Activated CD4-positive, alpha-beta T cell treated with anti-CD3 and anti-CD28 coated beads, Interleukin-2, amount 10 ng/mL, durations not matched to agents 24 days and 14 days (primary cell): ENCODE measurements at regions of chrX and their contacts with region 1.

Region 1: GRCh38 chrX:107118322-107119147 is at the start of gene RBM41:
- DNase-seq: peak; percentile 92
- H3K4me3 Mint-ChIP-seq: peak within 1 kb of the TSS; percentile 97
- H3K27ac Mint-ChIP-seq: peak within 1 kb of the TSS; percentile 97
- H3K4me1 Mint-ChIP-seq: peaks cover 23% of the 10 kb centered on the region
- H3K27me3 Mint-ChIP-seq: no peaks in the 10 kb centered on the region
- total RNA-seq, gene RBM41: 15.7 and 16.2 TPM in 2 replicates

Region 2: DNA sequence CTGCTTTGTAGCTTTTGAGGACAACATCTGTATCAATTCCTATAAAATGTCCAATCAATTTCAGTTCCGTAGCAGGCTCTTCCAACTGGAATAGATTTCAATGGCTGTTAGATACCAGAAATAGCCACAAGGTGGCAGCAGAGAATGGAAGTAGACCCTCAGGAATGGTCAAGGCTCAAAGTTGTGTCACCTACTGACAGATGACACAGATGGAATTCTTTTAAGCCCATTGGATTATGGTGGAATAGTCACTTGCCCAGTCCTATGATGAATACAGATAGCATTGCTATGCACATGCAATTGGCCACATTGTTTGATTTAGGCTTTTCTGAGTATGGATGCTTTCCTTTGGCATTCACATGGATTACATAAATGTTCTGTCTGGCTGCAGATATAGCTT is 637.2 kb before region 1 on chrX:
- intact Hi-C with region 1: loop called (anchors 10 kb)
- DNase-seq: peak; percentile 81
- H3K4me3 Mint-ChIP-seq: no peak overlapping the region
- H3K27ac Mint-ChIP-seq: no peak overlapping the region
- H3K4me1 Mint-ChIP-seq: peaks cover 16% of the 10 kb centered on the region
- H3K27me3 Mint-ChIP-seq: no peaks in the 10 kb centered on the region

Region 3: DNA sequence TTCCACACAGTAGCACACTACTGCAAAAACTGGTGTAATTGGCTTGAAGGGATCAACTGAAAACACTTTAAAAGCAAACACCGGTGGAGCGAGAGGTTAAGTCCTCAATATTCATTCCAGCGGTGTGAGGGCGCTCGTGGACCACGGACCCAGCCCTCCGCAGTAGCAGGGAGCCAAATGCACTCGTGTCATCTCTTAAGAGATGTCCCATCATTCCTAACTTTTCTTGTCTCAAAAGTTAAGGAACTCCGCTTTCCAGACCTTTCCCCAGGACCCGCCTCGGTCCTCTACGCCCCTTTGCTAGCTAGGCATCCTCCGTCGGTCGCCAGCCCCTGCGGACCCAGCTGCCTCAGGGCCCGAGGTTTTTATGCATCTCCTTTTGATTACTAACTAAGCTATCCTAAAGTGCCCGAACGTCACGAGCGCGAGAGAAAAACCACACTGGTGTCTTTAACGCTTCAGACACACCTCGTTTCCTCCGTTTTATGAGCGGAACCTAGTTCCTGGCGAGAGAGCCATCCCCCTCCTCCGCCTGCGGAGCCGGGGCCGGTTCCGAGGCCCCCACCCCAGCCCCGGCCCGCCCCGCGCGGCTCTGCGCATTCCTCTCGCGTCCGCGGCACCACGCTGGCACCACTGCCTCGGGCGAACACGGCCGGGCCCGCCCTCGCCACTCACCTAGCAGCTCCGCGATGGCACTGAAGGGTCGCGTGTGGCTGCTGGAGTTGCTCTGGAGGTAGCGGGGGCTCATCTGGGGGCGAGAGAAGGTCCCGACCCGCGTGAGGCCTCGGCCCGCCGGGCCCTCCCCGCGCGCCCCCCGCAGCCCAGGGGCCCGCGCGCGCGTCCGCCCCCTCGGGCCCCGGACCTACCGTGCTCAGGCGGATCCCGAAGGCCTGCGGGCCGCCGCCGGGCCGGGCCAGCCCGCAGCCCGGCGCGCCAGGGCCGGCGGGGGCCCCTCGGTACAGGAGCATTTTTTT is 119.2 kb before region 1 on chrX:
- intact Hi-C with region 1: loop called (anchors 1 kb)
- DNase-seq: peak; percentile 80
- H3K4me3 Mint-ChIP-seq: peak overlapping the region; percentile 88
- H3K27ac Mint-ChIP-seq: peak overlapping the region; percentile 40
- H3K4me1 Mint-ChIP-seq: peaks cover 7% of the 10 kb centered on the region
- H3K27me3 Mint-ChIP-seq: no peaks in the 10 kb centered on the region

Region 4: GRCh38 chrX:107154787-107155620 is 36.5 kb after region 1 on chrX:
- intact Hi-C with region 1: loop called (anchors 5 kb)
- DNase-seq: peak; percentile 65
- H3K4me3 Mint-ChIP-seq: peak overlapping the region; percentile 81
- H3K27ac Mint-ChIP-seq: peak overlapping the region; percentile 87
- H3K4me1 Mint-ChIP-seq: peaks cover 5% of the 10 kb centered on the region
- H3K27me3 Mint-ChIP-seq: no peaks in the 10 kb centered on the region

Region 5: GRCh38 chrX:107205770-107206696 is 87.5 kb after region 1 on chrX and contains the starts of genes DNAAF6 and NUP62CL:
- intact Hi-C with region 1: loop called (anchors 5 kb)
- DNase-seq: peak; percentile 89
- H3K4me3 Mint-ChIP-seq: peak within 1 kb of the TSS; percentile 92
- H3K27ac Mint-ChIP-seq: peak within 1 kb of the TSS; percentile 67
- H3K4me1 Mint-ChIP-seq: peaks cover 3% of the 10 kb centered on the region
- H3K27me3 Mint-ChIP-seq: no peaks in the 10 kb centered on the region
- total RNA-seq, gene DNAAF6: not detected in 2 replicates
- total RNA-seq, gene NUP62CL: 1.1 and 1.2 TPM in 2 replicates

Region 6: GRCh38 chrX:107627838-107628661 is 509.5 kb after region 1 on chrX and contains the start of gene PRPS1:
- intact Hi-C with region 1: loop called (anchors 2 kb)
- DNase-seq: peak; percentile 96
- H3K4me3 Mint-ChIP-seq: peak within 1 kb of the TSS; percentile 94
- H3K27ac Mint-ChIP-seq: peak within 1 kb of the TSS; percentile 95
- H3K4me1 Mint-ChIP-seq: peaks cover 22% of the 10 kb centered on the region
- H3K27me3 Mint-ChIP-seq: no peaks in the 10 kb centered on the region
- total RNA-seq, gene PRPS1: 112 and 115 TPM in 2 replicates

Region 7: DNA sequence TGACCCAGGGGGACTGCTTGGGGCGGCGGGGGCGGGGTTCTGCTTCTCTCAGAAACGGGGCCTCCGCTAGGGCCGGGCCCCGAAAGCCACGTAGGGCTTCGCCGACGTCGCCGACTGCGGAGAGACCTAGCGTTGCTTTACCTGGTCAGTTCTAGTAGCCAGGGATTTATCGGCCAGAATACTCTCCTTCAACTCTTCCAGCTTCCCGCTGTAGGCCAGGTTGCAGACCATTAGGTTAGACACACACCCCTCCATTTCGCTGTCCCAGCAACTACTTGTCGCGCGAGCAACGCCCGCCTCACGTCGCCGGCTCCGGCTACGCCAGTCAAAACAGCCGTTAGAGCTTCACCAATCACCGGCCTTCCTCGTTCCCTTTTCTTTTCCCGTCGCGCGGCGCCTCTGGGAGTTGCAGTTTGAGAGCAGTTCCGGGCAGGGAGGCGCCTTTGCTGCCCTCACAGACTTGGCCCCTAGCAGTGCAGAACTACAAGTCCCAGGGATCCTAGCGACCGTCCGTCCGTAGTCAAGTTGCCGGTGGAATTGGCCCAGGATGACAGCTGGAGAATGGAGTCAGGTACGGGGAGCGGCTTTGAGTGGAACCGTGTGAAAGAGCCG is 972.8 kb after region 1 on chrX and contains the starts of genes ATG4A and PSMD10:
- intact Hi-C with region 1: loop called (anchors 1 kb)
- DNase-seq: peak; percentile 96
- H3K4me3 Mint-ChIP-seq: no peak within 1 kb of the TSS
- H3K27ac Mint-ChIP-seq: no peak within 1 kb of the TSS
- H3K4me1 Mint-ChIP-seq: peaks cover 6% of the 10 kb centered on the region
- H3K27me3 Mint-ChIP-seq: no peaks in the 10 kb centered on the region
- total RNA-seq, gene ATG4A: 7.8 and 9.4 TPM in 2 replicates
- total RNA-seq, gene PSMD10: 45.2 and 54.8 TPM in 2 replicates